Transverse colon (tissue), 4 donors: ENCODE measurements at regions of chr2 and their contacts with region 1.

Region 1: GRCh38 chr2:37365669-37366068 is 21.2 kb downstream of the QPCT start:
- DNase-seq: no peak
- H3K4me3 ChIP-seq: no peak overlapping the region
- H3K27ac ChIP-seq: no peak overlapping the region
- H3K4me1 ChIP-seq: peaks cover 0 to 6% (median 0%) of the 10 kb centered on the region in 4 donors
- H3K27me3 ChIP-seq: no peaks in the 10 kb centered on the region
- CTCF ChIP-seq: no peak
- EP300 ChIP-seq: no peak
- POLR2A ChIP-seq: no peak

Region 2: DNA sequence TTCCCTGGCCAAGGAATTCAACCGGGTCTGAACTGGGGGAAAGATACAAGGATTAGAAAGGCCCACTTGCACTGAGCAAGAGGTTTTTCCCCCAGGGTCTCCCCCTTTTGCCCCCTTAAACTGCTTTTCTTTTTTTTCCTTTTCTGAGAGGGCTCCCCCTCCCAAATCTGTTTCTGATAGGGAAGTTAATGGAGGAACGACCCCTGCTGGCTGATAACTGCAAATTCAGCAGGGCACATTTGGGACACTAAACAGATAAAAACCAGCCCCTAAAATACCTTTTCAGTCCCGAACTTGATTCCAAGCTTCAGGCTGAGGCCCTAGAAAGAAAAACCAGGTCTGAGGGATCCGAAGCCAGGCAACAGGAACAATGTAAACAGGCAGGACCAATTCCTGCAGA is 2022.5 kb before region 1 on chr2:
- in situ Hi-C with region 1: no loop called
- intact Hi-C with region 1: no loop called
- DNase-seq: no peak
- H3K4me3 ChIP-seq: no peak overlapping the region
- H3K27ac ChIP-seq: no peak overlapping the region
- H3K4me1 ChIP-seq: no peaks in the 10 kb centered on the region
- H3K27me3 ChIP-seq: no peaks in the 10 kb centered on the region
- CTCF ChIP-seq: no peak
- EP300 ChIP-seq: no peak
- POLR2A ChIP-seq: no peak

Region 3: DNA sequence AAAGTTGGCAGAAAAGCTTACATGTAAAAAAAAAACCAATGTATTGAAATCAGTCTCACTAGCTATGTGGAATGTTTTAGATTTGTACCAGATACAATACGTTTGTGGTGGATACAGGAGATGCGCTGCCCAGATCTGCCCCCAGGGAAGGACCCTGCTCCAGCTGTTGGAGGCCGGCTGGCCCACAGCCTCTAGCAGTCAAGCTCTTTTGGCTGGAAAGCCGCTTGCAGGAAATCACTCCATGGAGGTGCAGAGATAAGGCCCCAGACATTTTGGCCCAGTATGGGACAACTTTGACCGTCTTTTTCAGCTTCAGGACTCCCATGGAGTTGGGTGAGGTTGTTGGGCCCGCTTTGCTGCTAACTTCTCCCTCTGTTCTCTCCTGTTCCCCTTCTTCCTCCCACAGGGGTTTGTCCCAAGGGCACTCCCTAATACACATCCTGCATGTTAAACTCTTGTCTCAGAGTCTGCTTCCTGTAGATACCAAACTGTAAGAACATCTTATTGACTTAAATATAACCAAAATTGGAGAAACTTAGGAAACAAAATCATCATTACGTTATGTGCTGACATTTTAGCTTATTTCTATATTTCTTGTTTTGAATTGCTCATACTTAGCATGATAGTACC is 23.0 kb before region 1 on chr2:
- in situ Hi-C with region 1: no loop called
- intact Hi-C with region 1: loop called (anchors 1 kb)
- DNase-seq: no peak
- H3K4me3 ChIP-seq: no peak overlapping the region
- H3K27ac ChIP-seq: peak overlapping the region in 1 of 4 donors; percentile 74
- H3K4me1 ChIP-seq: peaks cover 0 to 17% (median 15%) of the 10 kb centered on the region in 4 donors
- H3K27me3 ChIP-seq: no peaks in the 10 kb centered on the region
- CTCF ChIP-seq: no peak
- EP300 ChIP-seq: no peak
- POLR2A ChIP-seq: no peak